Activated B cell treated with CpG ODN at 0.5 μM for 24 hours (primary cell): ENCODE measurements at regions of chr15 and their contacts with region 1.

Region 1: DNA sequence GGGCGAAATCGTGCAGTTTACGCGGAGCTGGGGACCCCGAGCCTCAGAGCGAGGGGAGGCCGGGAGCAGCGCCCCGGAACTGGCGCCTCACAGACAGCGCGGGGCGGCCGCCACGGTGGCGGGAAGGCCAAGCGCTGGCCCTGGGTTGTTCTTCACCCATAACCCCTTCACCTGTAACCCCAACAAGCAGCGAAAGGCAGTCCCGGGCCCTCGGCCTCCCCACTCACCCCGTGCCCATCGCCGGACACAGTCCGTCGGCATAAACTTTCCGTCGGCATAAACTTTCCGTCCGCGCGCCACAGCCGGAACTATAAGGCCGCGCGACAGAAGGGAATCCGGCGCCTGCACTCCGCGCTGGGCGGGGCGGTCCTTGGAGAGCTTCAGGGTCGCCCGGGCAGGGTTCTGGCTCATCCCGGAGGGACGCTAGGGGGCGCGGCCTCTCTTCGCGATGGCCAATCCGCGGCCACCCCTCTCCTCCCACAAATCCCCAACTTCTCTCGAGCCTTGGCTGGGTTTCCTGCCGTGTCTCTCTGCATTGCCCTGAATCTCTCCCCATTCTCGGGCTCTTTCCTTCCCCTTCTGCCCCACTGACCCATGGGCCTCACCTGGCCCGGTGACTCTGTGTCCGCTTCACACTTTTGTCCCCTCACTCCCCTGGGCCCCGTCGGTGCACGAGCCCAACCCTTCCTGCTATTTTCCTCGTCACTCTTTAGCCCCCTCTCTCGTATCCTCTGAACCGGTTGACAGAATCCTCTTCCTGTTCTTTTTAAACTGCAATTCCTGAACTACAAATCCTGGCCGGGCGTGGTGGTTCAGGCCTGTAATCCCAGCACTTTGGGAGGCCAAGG is at the start of gene INTS14:
- DNase-seq: peak; percentile 89
- ATAC-seq: peak; percentile 98
- H3K4me3 Mint-ChIP-seq: peak within 1 kb of the TSS; percentile 92
- H3K27ac Mint-ChIP-seq: peak within 1 kb of the TSS; percentile 91
- H3K4me1 Mint-ChIP-seq: peaks cover 35% of the 10 kb centered on the region
- H3K27me3 Mint-ChIP-seq: no peaks in the 10 kb centered on the region
- CTCF ChIP-seq: no peak
- total RNA-seq, gene INTS14: 37.6 and 41.2 TPM in 2 replicates

Region 2: GRCh38 chr15:65516997-65517865 is 93.9 kb before region 1 on chr15 and contains the start of gene DPP8:
- CTCF ChIA-PET with region 1: interaction called, 3 read pairs
- POLR2A ChIA-PET with region 1: interaction called, 19 read pairs
- intact Hi-C with region 1: loop called (anchors 1 kb)
- DNase-seq: peak; percentile 91
- ATAC-seq: peak; percentile 94
- H3K4me3 Mint-ChIP-seq: peak within 1 kb of the TSS; percentile 96
- H3K27ac Mint-ChIP-seq: peak within 1 kb of the TSS; percentile 89
- H3K4me1 Mint-ChIP-seq: peaks cover 37% of the 10 kb centered on the region
- H3K27me3 Mint-ChIP-seq: no peaks in the 10 kb centered on the region
- CTCF ChIP-seq: no peak
- total RNA-seq, gene DPP8: 43.0 and 52.2 TPM in 2 replicates

Region 3: GRCh38 chr15:65530314-65531122 is 80.6 kb before region 1 on chr15 and contains the start of gene HACD3:
- CTCF ChIA-PET with region 1: interaction called, 3 read pairs
- POLR2A ChIA-PET with region 1: interaction called, 7 read pairs
- intact Hi-C with region 1: loop called (anchors 5 kb)
- DNase-seq: peak; percentile 92
- ATAC-seq: peak; percentile 98
- H3K4me3 Mint-ChIP-seq: peak within 1 kb of the TSS; percentile 87
- H3K27ac Mint-ChIP-seq: peak within 1 kb of the TSS; percentile 74
- H3K4me1 Mint-ChIP-seq: peaks cover 21% of the 10 kb centered on the region
- H3K27me3 Mint-ChIP-seq: no peaks in the 10 kb centered on the region
- CTCF ChIP-seq: no peak
- total RNA-seq, gene HACD3: 11.5 and 12.1 TPM in 2 replicates

Region 4: GRCh38 chr15:65583701-65584100 is 27.4 kb before region 1 on chr15:
- CTCF ChIA-PET with region 1: no interaction called
- POLR2A ChIA-PET with region 1: no interaction called
- intact Hi-C with region 1: no loop called
- DNase-seq: no peak
- ATAC-seq: no peak
- H3K4me3 Mint-ChIP-seq: no peak overlapping the region
- H3K27ac Mint-ChIP-seq: peak overlapping the region; percentile 76
- H3K4me1 Mint-ChIP-seq: peaks cover 17% of the 10 kb centered on the region
- H3K27me3 Mint-ChIP-seq: no peaks in the 10 kb centered on the region
- CTCF ChIP-seq: no peak

Region 5: GRCh38 chr15:65630760-65631159 is 19.7 kb after region 1 on chr15:
- CTCF ChIA-PET with region 1: interaction called, 3 read pairs
- POLR2A ChIA-PET with region 1: interaction called, 16 read pairs
- intact Hi-C with region 1: loop called (anchors 1 kb)
- DNase-seq: no peak
- ATAC-seq: peak; percentile 75
- H3K4me3 Mint-ChIP-seq: no peak overlapping the region
- H3K27ac Mint-ChIP-seq: no peak overlapping the region
- H3K4me1 Mint-ChIP-seq: peaks cover 21% of the 10 kb centered on the region
- H3K27me3 Mint-ChIP-seq: no peaks in the 10 kb centered on the region
- CTCF ChIP-seq: no peak